ENCODE measurements at regions of chr9 and their contacts with region 1.

Region 1: GRCh38 chr9:110058304-110058953 is 149.5 kb downstream of the C9orf152 start:
- DNase-seq: peak; percentile 57
- H3K4me3 ChIP-seq: no peak overlapping the region
- H3K27ac ChIP-seq: no peak overlapping the region
- H3K4me1 ChIP-seq: peaks cover 5% of the 10 kb centered on the region
- H3K27me3 ChIP-seq: no peaks in the 10 kb centered on the region
- CTCF ChIP-seq: peak; percentile 61 to 79

Region 2: DNA sequence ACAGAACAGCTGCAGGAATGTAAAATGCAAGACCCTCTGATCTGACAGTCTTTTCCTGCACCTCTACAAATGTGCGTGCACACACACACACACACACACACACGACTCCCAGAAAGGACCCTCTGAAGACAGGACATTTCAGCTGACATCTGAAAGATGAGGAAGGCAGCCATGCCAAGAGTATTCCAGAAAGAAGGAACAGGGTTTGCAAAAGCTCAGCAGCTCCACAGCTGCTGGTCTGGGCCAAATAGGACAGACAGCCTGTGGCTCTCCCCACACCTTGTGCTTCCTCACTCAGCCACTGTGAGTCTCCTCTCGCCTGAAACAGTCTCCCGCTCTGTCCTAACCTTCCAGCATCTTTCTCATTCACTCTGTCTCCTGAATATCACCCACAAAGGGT is 89.4 kb before region 1 on chr9:
- CTCF ChIA-PET with region 1: interaction called, 13 read pairs
- dilution Hi-C with region 1: no loop called
- in situ Hi-C with region 1: no loop called
- intact Hi-C with region 1: loop called (anchors 2 kb)
- DNase-seq: peak; percentile 8
- H3K4me3 ChIP-seq: no peak overlapping the region
- H3K27ac ChIP-seq: no peak overlapping the region
- H3K4me1 ChIP-seq: peaks cover 3% of the 10 kb centered on the region
- H3K27me3 ChIP-seq: no peaks in the 10 kb centered on the region
- CTCF ChIP-seq: peak; percentile 10 to 42

Region 3: GRCh38 chr9:110007477-110008270 is 50.8 kb before region 1 on chr9:
- CTCF ChIA-PET with region 1: no interaction called
- dilution Hi-C with region 1: no loop called
- in situ Hi-C with region 1: no loop called
- intact Hi-C with region 1: no loop called
- DNase-seq: no peak
- H3K4me3 ChIP-seq: no peak overlapping the region
- H3K27ac ChIP-seq: no peak overlapping the region
- H3K4me1 ChIP-seq: peaks cover 3% of the 10 kb centered on the region
- H3K27me3 ChIP-seq: no peaks in the 10 kb centered on the region
- CTCF ChIP-seq: no peak

Region 4: GRCh38 chr9:110099236-110100095 is 41.0 kb after region 1 on chr9:
- CTCF ChIA-PET with region 1: no interaction called
- dilution Hi-C with region 1: no loop called
- in situ Hi-C with region 1: no loop called
- intact Hi-C with region 1: no loop called
- DNase-seq: peak; percentile 66
- H3K4me3 ChIP-seq: no peak overlapping the region
- H3K27ac ChIP-seq: peak overlapping the region; percentile 5
- H3K4me1 ChIP-seq: peaks cover 41% of the 10 kb centered on the region
- H3K27me3 ChIP-seq: no peaks in the 10 kb centered on the region
- CTCF ChIP-seq: no peak

Measured in mammary epithelial cell (primary cell).